Endothelial cell of umbilical vein (primary cell): ENCODE measurements at regions of chr19 and their contacts with region 1.

Region 1: DNA sequence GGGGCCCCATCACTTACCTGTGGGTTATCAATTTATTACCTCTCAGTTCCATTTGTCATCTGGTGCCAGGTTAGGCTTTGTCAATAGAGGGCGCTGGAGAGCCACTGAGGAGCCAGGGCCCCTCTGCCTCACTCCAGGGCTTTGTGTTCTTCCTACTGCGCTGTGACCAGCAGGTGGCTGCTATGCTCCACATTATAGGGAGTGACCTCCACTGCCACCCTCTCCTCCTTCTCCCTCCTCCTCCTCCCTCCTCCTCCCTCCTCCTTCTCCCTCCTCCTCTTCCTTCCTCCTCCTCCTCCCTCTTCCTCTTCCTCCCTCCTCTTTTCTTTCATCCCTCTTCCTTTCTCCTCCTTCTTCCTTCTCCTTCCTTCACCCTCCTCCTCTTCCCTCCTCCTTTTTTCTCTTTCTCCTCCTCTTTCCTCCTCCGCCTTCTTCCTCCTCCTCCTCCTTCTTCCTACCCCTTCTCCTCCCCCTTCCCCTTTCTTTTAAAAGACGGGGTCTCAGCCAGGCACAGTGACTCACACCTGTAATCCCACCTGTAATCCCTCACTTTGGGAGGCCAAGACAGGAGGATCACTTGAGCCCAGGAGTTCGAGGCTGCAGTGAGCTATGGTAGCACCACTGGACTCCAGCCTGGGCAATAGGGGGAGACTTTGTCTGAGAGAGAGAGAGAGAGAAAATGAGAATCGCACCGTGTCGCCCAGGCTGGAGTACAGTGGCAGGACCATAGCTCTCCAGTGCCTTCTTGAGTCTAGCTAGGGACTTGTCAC is 10.3 kb upstream of the ZBTB32 start:
- DNase-seq: peak; percentile 78
- H3K4me3 ChIP-seq: no peak overlapping the region
- H3K27ac ChIP-seq: no peak overlapping the region
- H3K4me1 ChIP-seq: no peaks in the 10 kb centered on the region
- H3K27me3 ChIP-seq: no peaks in the 10 kb centered on the region
- CTCF ChIP-seq: peak; percentile 97
- POLR2A ChIP-seq: no peak

Region 2: GRCh38 chr19:35740423-35741202 is 46.6 kb after region 1 on chr19:
- CTCF ChIA-PET with region 1: interaction called, 4 read pairs
- POLR2A ChIA-PET with region 1: no interaction called
- dilution Hi-C with region 1: no loop called
- intact Hi-C with region 1: loop called (anchors 1 kb)
- DNase-seq: peak; percentile 97
- H3K4me3 ChIP-seq: peak overlapping the region; percentile 50 to 78 (median 62)
- H3K27ac ChIP-seq: peak overlapping the region; percentile 64
- H3K4me1 ChIP-seq: peaks cover 14% of the 10 kb centered on the region
- H3K27me3 ChIP-seq: no peaks in the 10 kb centered on the region
- CTCF ChIP-seq: no peak
- POLR2A ChIP-seq: peak; percentile 72